PC-3 (cell line): ENCODE measurements at regions of chr6 and their contacts with region 1.

Region 1: GRCh38 chr6:166707045-166707444 is 80.0 kb upstream of the RPS6KA2 start:
- DNase-seq: peak; percentile 65
- ATAC-seq: peak; percentile 96
- H3K4me3 ChIP-seq: no peak overlapping the region
- H3K27ac ChIP-seq: peak overlapping the region; percentile 2
- H3K4me1 ChIP-seq: 0 out of 2 replicates have a peak, but pooled peaks cover 9% of the 10 kb centered on the region
- H3K27me3 ChIP-seq: no peaks in the 10 kb centered on the region
- CTCF ChIP-seq: peak; percentile 71

Region 2: GRCh38 chr6:166598441-166599138 is 108.5 kb before region 1 on chr6:
- CTCF ChIA-PET with region 1: no interaction called
- POLR2A ChIA-PET with region 1: no interaction called
- intact Hi-C with region 1: no loop called
- DNase-seq: no peak
- ATAC-seq: no peak
- H3K4me3 ChIP-seq: no peak overlapping the region
- H3K27ac ChIP-seq: no peak overlapping the region
- H3K4me1 ChIP-seq: no peaks in the 10 kb centered on the region
- H3K27me3 ChIP-seq: no peaks in the 10 kb centered on the region
- CTCF ChIP-seq: no peak

Region 3: DNA sequence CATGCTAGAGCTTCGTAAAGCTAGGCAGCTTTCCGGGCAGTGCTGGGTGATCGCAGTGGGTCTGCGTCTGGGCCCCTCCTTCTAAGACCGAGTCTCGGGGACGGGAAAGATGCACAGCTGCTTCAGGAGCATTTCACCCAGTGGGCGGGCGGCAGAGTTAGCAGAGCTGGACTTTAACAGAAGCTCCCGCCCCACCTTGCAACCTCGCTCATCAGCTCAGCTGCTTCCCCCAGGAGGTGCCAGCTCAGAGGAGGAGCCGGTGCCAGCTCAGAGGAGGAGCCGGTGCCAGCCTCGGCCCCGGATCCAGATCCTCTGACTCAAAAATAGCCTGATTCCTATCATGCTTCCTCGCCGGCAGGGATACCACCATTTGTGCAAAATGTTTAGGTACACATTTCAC is 14.5 kb after region 1 on chr6:
- CTCF ChIA-PET with region 1: no interaction called
- POLR2A ChIA-PET with region 1: no interaction called
- intact Hi-C with region 1: loop called (anchors 2 kb)
- DNase-seq: peak; percentile 71
- ATAC-seq: peak; percentile 74
- H3K4me3 ChIP-seq: peak overlapping the region; percentile 30
- H3K27ac ChIP-seq: peak overlapping the region; percentile 62
- H3K4me1 ChIP-seq: peaks cover 49% of the 10 kb centered on the region
- H3K27me3 ChIP-seq: no peaks in the 10 kb centered on the region
- CTCF ChIP-seq: no peak

Region 4: DNA sequence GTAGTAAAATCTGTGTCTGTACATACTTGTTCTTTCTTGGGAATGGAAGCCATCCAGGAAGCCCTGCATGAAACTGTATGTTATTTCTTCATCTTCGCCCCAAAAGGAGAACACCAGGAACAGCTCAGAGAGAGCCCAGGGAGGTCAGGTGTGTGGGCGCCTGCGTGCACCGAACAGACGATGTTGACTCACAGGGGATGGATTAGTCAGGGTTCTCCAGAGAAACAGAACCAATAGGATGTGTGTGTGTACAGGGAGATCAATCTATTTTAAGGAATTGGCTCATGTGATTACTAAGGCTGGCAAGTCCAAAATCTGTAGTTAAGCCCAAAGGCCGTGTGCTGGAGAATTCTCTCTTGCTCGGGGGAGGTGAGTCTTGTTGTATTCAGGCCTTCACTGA is 203.6 kb after region 1 on chr6:
- CTCF ChIA-PET with region 1: no interaction called
- POLR2A ChIA-PET with region 1: no interaction called
- intact Hi-C with region 1: no loop called
- DNase-seq: peak; percentile 4
- ATAC-seq: no peak
- H3K4me3 ChIP-seq: no peak overlapping the region
- H3K27ac ChIP-seq: no peak overlapping the region
- H3K4me1 ChIP-seq: no peaks in the 10 kb centered on the region
- H3K27me3 ChIP-seq: no peaks in the 10 kb centered on the region
- CTCF ChIP-seq: no peak